Colonic mucosa (tissue), 4 donors: ENCODE measurements at regions of chr16 and their contacts with region 1.

Region 1: DNA sequence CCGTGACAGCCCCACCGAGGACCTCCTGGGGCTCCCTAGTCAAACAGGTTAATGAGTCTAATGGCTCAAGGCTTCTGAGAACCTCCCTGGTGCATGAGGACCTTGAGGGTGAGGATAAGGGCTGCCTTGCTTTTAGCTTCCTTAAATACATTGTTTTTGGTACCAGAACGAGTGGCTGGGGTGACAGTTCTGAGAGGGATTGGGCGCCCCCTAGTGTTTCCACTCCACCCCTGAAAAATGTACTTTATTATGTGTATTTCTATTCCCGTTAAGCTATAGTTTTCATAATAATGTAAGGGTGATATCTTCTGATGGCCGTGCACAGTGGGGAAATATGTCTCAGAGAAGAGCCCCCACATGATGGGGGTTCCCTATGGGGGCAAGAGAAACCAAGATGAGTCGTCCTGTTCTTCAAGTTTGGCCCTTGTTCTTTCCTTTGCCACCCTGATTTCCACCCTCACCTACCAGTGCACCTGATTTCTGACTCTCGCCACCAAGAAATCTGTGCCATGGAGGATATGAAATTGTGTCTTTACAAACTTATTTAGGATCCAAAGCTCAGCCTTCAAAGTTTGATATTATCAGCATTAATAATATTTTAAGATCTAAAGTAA is 14.5 kb upstream of the VWA3A start:
- DNase-seq: peak; percentile 56
- H3K4me3 ChIP-seq: no peak overlapping the region
- H3K27ac ChIP-seq: no peak overlapping the region
- H3K4me1 ChIP-seq: no peaks in the 10 kb centered on the region
- H3K27me3 ChIP-seq: no peaks in the 10 kb centered on the region
- CTCF ChIP-seq: peak; percentile 70

Region 2: GRCh38 chr16:21952793-21953540 is 124.8 kb before region 1 on chr16 and contains the start of gene UQCRC2:
- intact Hi-C with region 1: loop called (anchors 5 kb)
- DNase-seq: peak; percentile 93
- H3K4me3 ChIP-seq: peak within 1 kb of the TSS; percentile 72
- H3K27ac ChIP-seq: peak within 1 kb of the TSS; percentile 91
- H3K4me1 ChIP-seq: peaks cover 11% of the 10 kb centered on the region
- H3K27me3 ChIP-seq: no peaks in the 10 kb centered on the region
- CTCF ChIP-seq: no peak
- total RNA-seq, gene UQCRC2: 477 to 641 TPM

Region 3: DNA sequence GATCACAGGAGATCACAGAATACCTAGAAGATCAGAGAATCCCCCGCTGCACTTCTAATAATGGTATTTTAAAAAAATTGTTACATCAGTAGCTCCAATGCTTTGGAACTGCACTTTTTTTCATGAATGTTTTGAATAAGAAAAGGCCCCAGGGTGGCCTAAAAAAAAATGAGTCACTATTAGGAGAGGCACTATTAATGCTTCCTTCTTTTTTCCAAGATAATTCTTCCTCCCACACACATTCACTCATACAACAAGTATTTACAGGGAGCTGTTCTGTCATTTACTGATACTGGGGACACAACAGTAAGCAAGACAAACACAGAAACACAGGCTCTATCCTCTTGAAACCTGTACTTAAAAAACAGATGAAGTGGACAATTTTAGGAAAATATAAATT is 76.2 kb before region 1 on chr16:
- intact Hi-C with region 1: loop called (anchors 2 kb)
- DNase-seq: no peak
- H3K4me3 ChIP-seq: no peak overlapping the region
- H3K27ac ChIP-seq: no peak overlapping the region
- H3K4me1 ChIP-seq: peaks cover 3% of the 10 kb centered on the region
- H3K27me3 ChIP-seq: no peaks in the 10 kb centered on the region
- CTCF ChIP-seq: no peak